ENCODE measurements at regions of chr7 and their contacts with region 1.

Region 1: DNA sequence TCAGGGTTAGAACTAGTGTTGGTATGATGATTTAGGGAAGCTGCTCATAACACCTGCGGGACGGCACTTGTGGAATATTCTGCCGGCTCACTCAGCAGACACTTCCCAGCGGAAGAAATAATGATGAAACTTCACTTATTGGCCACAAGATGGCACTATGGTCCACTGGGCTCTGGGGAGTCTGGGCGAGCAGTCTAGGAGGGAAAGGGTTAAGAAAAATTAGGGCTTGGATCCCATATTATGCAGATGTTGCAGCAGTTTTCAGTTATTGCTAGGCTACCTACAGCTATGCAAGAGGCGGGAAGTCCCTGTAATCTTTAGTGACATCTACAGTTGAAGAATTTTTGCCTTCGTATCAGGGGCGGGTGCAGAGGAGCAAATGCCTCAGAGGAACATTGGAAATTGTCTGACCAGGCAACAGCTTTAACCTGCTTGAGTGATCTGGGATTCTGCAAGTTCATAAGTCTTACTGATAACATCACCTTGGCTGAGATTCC is 238.7 kb upstream of the PRSS58 start:
- DNase-seq: peak; percentile 42
- ATAC-seq: peak; percentile 89
- H3K4me3 ChIP-seq: peak overlapping the region in 1 of 2 experiments; percentile 13; a peak in 1 of 4 replicates
- H3K27ac ChIP-seq: no peak overlapping the region
- H3K4me1 ChIP-seq: peaks cover 0 to 10% of the 10 kb centered on the region in 2 experiments; a peak in 1 of 4 replicates
- H3K27me3 ChIP-seq: no peaks in the 10 kb centered on the region
- CTCF ChIP-seq: peak; percentile 66 to 91 (median 75)
- POLR2A ChIP-seq: no peak
- RAD21 ChIP-seq: peak; percentile 77

Region 2: GRCh38 chr7:141144921-141145629 is 1351.5 kb before region 1 on chr7:
- CTCF ChIA-PET with region 1: no interaction called
- POLR2A ChIA-PET with region 1: no interaction called
- RAD21 ChIA-PET with region 1: no interaction called
- intact Hi-C with region 1: loop called (anchors 10 kb)
- DNase-seq: no peak
- ATAC-seq: no peak
- H3K4me3 ChIP-seq: no peak overlapping the region
- H3K27ac ChIP-seq: no peak overlapping the region
- H3K4me1 ChIP-seq: no peaks in the 10 kb centered on the region
- H3K27me3 ChIP-seq: peaks cover 24% of the 10 kb centered on the region
- CTCF ChIP-seq: no peak
- POLR2A ChIP-seq: no peak
- RAD21 ChIP-seq: no peak

Region 3: DNA sequence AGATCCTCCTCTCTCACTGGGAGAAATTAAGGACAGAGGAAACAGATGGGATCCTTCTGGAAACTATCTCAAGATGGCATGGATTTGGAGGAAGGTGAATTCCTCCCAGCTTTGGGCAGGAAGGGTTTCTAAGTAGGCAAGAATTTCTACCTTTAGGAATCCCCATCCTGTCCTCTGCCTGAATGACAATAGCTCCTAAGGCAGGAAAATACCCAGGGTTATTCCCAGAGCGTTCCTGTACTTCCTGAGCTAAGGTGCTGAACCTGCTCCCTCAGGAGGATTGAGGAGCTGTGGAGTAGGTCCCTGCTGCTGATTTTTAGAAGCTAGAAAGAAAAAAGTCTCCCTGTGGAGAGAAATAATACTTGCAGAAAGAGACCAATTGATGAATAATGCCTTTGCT is 384.5 kb before region 1 on chr7:
- CTCF ChIA-PET with region 1: no interaction called
- POLR2A ChIA-PET with region 1: no interaction called
- RAD21 ChIA-PET with region 1: no interaction called
- intact Hi-C with region 1: no loop called
- DNase-seq: no peak
- ATAC-seq: no peak
- H3K4me3 ChIP-seq: no peak overlapping the region
- H3K27ac ChIP-seq: no peak overlapping the region
- H3K4me1 ChIP-seq: no peaks in the 10 kb centered on the region
- H3K27me3 ChIP-seq: peaks cover 4% of the 10 kb centered on the region; the same call in 1 of the 2 replicates
- CTCF ChIP-seq: no peak
- POLR2A ChIP-seq: no peak
- RAD21 ChIP-seq: no peak

Region 4: DNA sequence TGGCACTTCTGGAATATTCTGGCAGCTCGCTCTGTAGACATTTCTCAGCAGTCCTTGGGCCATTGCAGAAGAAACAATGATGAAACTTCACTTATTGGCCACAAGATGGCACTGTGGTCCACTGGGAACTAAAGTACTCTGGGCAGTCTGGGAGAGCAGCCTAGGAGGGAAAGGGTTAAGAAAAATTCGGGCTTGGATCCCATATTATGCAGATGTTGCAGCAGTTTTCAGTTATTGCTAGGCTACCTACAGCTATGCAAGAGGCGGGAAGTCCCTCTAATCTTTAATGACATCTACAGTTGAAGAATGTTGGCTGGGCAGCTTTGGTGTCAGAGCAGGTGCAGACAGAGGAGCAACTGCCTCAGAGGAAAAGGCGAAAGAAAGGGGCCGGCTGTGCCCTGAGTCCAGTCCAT is 37.0 kb before region 1 on chr7:
- CTCF ChIA-PET with region 1: interaction called, 9 read pairs
- POLR2A ChIA-PET with region 1: interaction called, 4 read pairs
- RAD21 ChIA-PET with region 1: no interaction called
- intact Hi-C with region 1: loop called (anchors 1 kb)
- DNase-seq: peak; percentile 41
- ATAC-seq: peak; percentile 97
- H3K4me3 ChIP-seq: no peak overlapping the region
- H3K27ac ChIP-seq: no peak overlapping the region
- H3K4me1 ChIP-seq: peaks cover 0 to 10% of the 10 kb centered on the region in 2 experiments; a peak in 2 of 4 replicates
- H3K27me3 ChIP-seq: no peaks in the 10 kb centered on the region
- CTCF ChIP-seq: peak; percentile 70 to 85 (median 77)
- POLR2A ChIP-seq: no peak
- RAD21 ChIP-seq: peak; percentile 71

Region 5: GRCh38 chr7:142508258-142508689 is 11.7 kb after region 1 on chr7:
- CTCF ChIA-PET with region 1: interaction called, 12 read pairs
- POLR2A ChIA-PET with region 1: no interaction called
- RAD21 ChIA-PET with region 1: no interaction called
- intact Hi-C with region 1: no loop called
- DNase-seq: peak; percentile 54
- ATAC-seq: peak; percentile 85
- H3K4me3 ChIP-seq: peak overlapping the region in 1 of 2 experiments; percentile 18; a peak in 1 of 4 replicates
- H3K27ac ChIP-seq: peak overlapping the region; percentile 36
- H3K4me1 ChIP-seq: peaks cover 4 to 41% of the 10 kb centered on the region in 2 experiments; a peak in 3 of 4 replicates
- H3K27me3 ChIP-seq: no peaks in the 10 kb centered on the region
- CTCF ChIP-seq: no peak
- POLR2A ChIP-seq: no peak
- RAD21 ChIP-seq: no peak

Region 6: GRCh38 chr7:142548978-142549377 is 52.4 kb after region 1 on chr7:
- CTCF ChIA-PET with region 1: no interaction called
- POLR2A ChIA-PET with region 1: no interaction called
- RAD21 ChIA-PET with region 1: no interaction called
- intact Hi-C with region 1: no loop called
- DNase-seq: no peak
- ATAC-seq: no peak
- H3K4me3 ChIP-seq: no peak overlapping the region
- H3K27ac ChIP-seq: no peak overlapping the region
- H3K4me1 ChIP-seq: no peaks in the 10 kb centered on the region
- H3K27me3 ChIP-seq: no peaks in the 10 kb centered on the region
- CTCF ChIP-seq: no peak
- POLR2A ChIP-seq: no peak
- RAD21 ChIP-seq: no peak

Region 7: GRCh38 chr7:142587578-142588191 is 91.1 kb after region 1 on chr7:
- CTCF ChIA-PET with region 1: interaction called, 10 read pairs
- POLR2A ChIA-PET with region 1: no interaction called
- RAD21 ChIA-PET with region 1: no interaction called
- intact Hi-C with region 1: no loop called
- DNase-seq: peak; percentile 82
- ATAC-seq: peak; percentile 96
- H3K4me3 ChIP-seq: no peak overlapping the region
- H3K27ac ChIP-seq: 0 out of 2 replicates have a peak overlapping the region, but pooled peaks have one; percentile 9
- H3K4me1 ChIP-seq: peaks cover 0 to 23% of the 10 kb centered on the region in 2 experiments; a peak in 3 of 4 replicates
- H3K27me3 ChIP-seq: no peaks in the 10 kb centered on the region
- CTCF ChIP-seq: peak; percentile 86 to 99 (median 89)
- POLR2A ChIP-seq: no peak
- RAD21 ChIP-seq: peak; percentile 56

Measured in HCT116 (cell line).